ENCODE measurements at regions of chr16 and their contacts with region 1.

Region 1: GRCh38 chr16:68040507-68041288 is 17.6 kb downstream of the DUS2 start:
- DNase-seq: peak; percentile 93
- ATAC-seq: peak; percentile 99
- H3K4me3 Mint-ChIP-seq: no peak overlapping the region
- H3K27ac Mint-ChIP-seq: peak overlapping the region; percentile 69
- H3K4me1 Mint-ChIP-seq: peaks cover 26% of the 10 kb centered on the region
- H3K27me3 Mint-ChIP-seq: no peaks in the 10 kb centered on the region

Region 2: DNA sequence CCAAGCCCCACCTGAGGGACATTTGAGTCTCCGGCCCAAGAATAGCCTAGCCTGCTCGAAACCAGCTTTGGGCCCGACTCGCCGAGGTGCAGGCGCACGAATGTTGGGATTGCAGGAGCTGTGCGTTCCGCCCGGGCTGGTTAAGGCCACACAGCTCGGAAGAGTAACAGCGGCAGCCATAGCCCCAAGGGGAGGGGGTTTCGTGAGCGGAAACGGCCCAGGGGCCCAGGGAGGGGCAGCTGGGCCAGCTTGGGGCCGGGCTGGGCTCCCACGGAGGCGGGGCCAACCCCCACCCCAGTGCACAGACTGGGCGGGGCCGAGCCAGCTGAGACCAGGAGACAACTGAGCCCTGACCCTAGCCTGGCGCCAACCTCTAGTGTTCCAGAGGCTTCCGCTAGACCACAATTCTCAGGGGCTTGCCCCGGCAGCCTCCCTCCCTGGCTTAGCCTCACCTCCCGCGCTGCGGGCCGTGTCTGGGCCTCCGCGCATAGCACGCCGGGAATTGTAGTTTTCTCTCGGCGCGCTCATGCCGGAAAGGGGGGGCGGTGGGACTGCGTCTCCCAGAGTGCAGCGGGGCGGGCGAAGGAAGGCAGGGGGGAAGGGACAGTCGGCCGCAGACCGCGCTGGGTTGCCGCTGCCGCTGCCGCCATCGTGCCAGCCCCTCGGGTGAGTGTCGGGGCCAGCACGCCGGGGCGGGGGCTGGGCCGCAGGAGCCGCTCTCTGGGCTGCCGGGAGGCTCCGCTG is 194.2 kb before region 1 on chr16 and contains the start of gene NUTF2:
- CTCF ChIA-PET with region 1: no interaction called
- POLR2A ChIA-PET with region 1: no interaction called
- DNase-seq: peak; percentile 98
- ATAC-seq: peak; percentile 66
- H3K4me3 Mint-ChIP-seq: peak within 1 kb of the TSS; percentile 96
- H3K27ac Mint-ChIP-seq: peak within 1 kb of the TSS; percentile 89
- H3K4me1 Mint-ChIP-seq: peaks cover 50% of the 10 kb centered on the region
- H3K27me3 Mint-ChIP-seq: no peaks in the 10 kb centered on the region
- total RNA-seq, gene NUTF2: 125 to 134 TPM

Region 3: DNA sequence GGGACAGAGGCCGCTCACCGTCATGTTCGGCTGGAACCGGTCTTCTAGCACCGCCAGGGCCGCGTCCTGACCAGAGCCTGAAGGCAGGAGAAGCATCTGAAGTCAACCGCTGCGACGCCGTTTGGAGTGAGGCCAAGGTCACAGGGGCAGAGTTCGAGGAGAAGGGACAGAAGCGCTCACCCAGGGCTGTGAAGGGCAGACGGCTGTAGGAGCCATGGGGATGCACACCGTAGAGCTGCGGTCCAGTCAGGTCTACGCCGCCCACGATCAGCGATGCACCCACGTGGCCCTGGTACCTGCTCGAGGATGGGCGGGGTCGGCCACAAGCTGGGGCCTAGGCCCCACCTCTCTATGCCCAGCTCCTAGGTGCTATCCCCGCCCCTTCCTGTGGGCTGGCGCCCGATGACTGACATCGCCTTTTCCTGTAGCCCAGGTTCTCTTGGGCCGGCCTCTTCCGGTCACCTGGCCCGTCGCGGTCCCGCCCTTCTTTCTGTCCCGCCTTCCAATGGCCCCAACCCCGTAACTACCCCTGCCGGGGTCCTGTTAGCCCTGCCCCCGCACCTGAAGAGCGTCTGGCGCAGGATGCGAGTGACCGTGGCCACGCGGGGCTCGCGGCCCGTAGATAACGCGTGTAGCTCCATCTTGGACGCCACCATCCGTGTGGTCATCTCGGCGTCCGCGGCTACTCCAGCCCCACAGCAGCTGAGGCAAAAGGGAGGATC is 105.1 kb before region 1 on chr16:
- CTCF ChIA-PET with region 1: interaction called, 27 read pairs
- POLR2A ChIA-PET with region 1: interaction called, 12 read pairs
- DNase-seq: peak; percentile 98
- ATAC-seq: peak; percentile 85
- H3K4me3 Mint-ChIP-seq: peak overlapping the region; percentile 100
- H3K27ac Mint-ChIP-seq: peak overlapping the region; percentile 99
- H3K4me1 Mint-ChIP-seq: peaks cover 44% of the 10 kb centered on the region
- H3K27me3 Mint-ChIP-seq: no peaks in the 10 kb centered on the region

Region 4: DNA sequence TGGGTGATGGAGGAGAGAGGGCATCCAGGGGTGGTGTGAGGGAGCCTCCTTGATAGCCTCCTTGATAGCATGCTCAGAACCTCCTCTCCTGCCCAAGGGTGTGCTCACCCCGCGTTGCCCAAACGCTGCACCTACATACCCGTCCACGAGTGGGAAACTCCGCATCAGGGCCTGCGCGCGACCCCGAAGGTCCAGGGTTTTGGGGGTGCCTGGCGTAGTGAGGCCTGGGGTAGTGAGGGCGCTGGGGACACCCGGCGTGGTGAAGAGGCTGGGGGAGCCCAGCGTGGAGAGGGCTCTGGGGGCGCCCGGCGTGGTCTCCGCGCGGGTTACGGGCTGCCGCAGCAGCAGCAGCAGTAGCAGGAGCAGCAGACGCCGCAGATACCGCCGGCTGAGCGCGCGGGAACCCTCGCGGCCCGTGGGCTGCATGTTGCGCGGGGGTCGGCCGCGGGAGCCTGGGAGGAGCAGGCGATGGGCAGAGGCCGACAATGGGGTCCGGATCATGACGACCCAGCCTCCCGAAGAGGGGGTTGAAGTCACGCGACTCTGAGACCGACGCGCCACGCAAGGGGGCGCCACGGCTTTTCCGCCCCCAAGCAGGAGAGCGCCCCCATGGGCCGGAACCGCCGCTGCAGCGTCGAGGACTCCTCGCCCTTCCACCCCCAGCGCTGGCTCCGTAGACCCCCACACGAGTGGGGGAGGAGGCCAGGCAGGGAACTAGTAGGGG is 60.6 kb before region 1 on chr16 and contains the start of gene DPEP3:
- CTCF ChIA-PET with region 1: interaction called, 32 read pairs
- POLR2A ChIA-PET with region 1: no interaction called
- DNase-seq: no peak
- ATAC-seq: no peak
- H3K4me3 Mint-ChIP-seq: no peak within 1 kb of the TSS
- H3K27ac Mint-ChIP-seq: no peak within 1 kb of the TSS
- H3K4me1 Mint-ChIP-seq: peaks cover 27% of the 10 kb centered on the region
- H3K27me3 Mint-ChIP-seq: peaks cover 6% of the 10 kb centered on the region
- total RNA-seq, gene DPEP3: not detected

Region 5: GRCh38 chr16:68005786-68006286 is 34.9 kb before region 1 on chr16:
- CTCF ChIA-PET with region 1: interaction called, 15 read pairs
- POLR2A ChIA-PET with region 1: no interaction called
- DNase-seq: peak; percentile 56
- ATAC-seq: peak; percentile 91
- H3K4me3 Mint-ChIP-seq: no peak overlapping the region
- H3K27ac Mint-ChIP-seq: peak overlapping the region; percentile 90
- H3K4me1 Mint-ChIP-seq: peaks cover 20% of the 10 kb centered on the region
- H3K27me3 Mint-ChIP-seq: no peaks in the 10 kb centered on the region

Region 6: DNA sequence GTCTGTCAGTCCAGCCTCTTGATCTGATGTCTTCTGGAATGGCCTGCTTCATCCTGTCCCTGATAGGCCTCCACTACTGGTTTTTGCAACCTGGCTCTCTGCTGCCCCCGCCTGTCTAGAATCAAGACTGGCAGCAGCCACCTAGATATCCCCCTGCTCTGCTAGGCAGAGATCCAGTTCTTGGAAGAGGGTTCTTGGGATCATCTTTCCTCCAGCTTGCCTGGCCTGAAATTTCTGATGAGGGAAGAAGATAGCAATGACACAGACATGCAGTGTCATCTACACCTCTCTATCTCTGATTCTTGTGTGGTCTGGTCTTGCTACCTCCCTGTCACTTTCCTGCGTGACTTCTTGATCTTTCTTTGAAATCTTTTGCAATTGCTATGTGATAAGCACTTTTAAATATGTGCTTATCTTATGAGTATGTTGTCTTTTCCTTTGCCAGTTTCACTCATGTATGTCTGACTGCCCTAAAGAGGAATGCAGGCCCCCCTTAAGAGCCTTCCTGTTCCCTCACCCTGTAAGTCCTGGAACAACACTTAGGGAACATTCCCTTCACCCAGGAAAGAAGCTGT is 24.2 kb after region 1 on chr16:
- CTCF ChIA-PET with region 1: interaction called, 27 read pairs
- POLR2A ChIA-PET with region 1: interaction called, 4 read pairs
- DNase-seq: peak; percentile 87
- ATAC-seq: peak; percentile 74
- H3K4me3 Mint-ChIP-seq: no peak overlapping the region
- H3K27ac Mint-ChIP-seq: peak overlapping the region; percentile 88
- H3K4me1 Mint-ChIP-seq: peaks cover 85% of the 10 kb centered on the region
- H3K27me3 Mint-ChIP-seq: no peaks in the 10 kb centered on the region

Measured in activated CD8-positive, alpha-beta T cell treated with anti-CD3 and anti-CD28 coated beads, Interleukin-2, amount 10 ng/mL, durations not matched to agents 7 days and 5 days (primary cell).